Activated CD8-positive, alpha-beta T cell treated with anti-CD3 and anti-CD28 coated beads, Interleukin-2, amount 10 ng/mL, durations not matched to agents 7 days and 5 days (primary cell): ENCODE measurements at regions of chr3 and their contacts with region 1.

Region 1: GRCh38 chr3:126982471-126983175 is at the start of gene PLXNA1:
- DNase-seq: peak; percentile 86
- ATAC-seq: peak; percentile 84
- H3K4me3 Mint-ChIP-seq: peak within 1 kb of the TSS; percentile 76
- H3K27ac Mint-ChIP-seq: peak within 1 kb of the TSS; percentile 73
- H3K4me1 Mint-ChIP-seq: peaks cover 23% of the 10 kb centered on the region
- H3K27me3 Mint-ChIP-seq: peaks cover 10% of the 10 kb centered on the region
- total RNA-seq, gene PLXNA1: 2.4 to 2.7 TPM

Region 2: DNA sequence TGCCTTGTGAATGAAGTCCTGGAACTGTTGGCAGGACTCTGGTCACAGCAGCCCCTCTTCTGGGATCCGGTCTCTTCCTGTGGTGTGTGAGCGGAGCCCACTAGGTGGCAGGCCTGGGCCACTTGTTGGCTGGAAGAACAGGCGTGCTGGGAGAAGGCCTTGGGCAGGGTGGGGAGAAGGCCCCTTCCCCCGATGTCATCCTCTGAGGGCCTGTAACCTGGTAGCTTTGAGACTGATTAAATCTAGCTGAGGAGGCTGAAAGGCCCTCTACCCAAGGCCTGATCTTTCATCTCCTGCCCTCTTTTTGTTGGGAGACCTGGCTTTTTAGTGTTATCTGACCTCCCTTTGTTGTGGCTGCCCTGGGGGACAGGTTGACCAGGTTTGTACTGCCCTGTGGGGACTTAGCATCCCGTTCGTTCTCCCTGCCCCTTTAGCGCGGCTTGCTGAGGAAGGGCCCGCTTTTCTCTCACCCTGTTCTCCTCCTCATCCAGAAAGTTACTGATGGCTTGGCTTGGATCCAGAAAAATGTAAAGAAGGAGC is 230.2 kb before region 1 on chr3:
- CTCF ChIA-PET with region 1: interaction called, 12 read pairs
- POLR2A ChIA-PET with region 1: no interaction called
- DNase-seq: peak; percentile 64
- ATAC-seq: peak; percentile 75
- H3K4me3 Mint-ChIP-seq: no peak overlapping the region
- H3K27ac Mint-ChIP-seq: no peak overlapping the region
- H3K4me1 Mint-ChIP-seq: no peaks in the 10 kb centered on the region
- H3K27me3 Mint-ChIP-seq: no peaks in the 10 kb centered on the region

Region 3: DNA sequence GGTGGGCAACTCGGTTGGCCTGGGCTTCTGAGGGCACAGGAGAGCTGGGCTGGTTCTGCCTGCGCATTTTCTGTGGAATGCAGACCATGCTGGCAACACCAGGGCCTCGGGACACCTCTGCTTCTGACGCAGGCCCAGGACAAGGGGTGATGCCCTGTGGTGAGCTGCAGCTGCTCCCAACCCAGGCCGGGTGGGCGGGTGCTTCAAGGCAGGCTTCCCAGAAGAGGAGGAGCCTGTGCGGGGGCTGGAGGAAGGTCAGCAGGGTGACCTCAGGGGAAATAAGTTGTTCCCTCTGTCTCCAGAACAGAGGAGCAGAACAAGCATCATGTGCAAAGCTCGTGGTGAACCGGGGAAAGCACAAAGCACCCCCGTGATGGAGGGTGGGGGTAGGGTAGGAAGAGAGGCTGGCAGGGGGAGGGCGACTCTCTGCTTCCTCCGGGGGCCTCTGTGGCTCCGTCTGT is 10.7 kb before region 1 on chr3:
- CTCF ChIA-PET with region 1: interaction called, 12 read pairs
- POLR2A ChIA-PET with region 1: no interaction called
- DNase-seq: no peak
- ATAC-seq: no peak
- H3K4me3 Mint-ChIP-seq: no peak overlapping the region
- H3K27ac Mint-ChIP-seq: no peak overlapping the region
- H3K4me1 Mint-ChIP-seq: no peaks in the 10 kb centered on the region
- H3K27me3 Mint-ChIP-seq: peaks cover 24% of the 10 kb centered on the region